Cardiac septum (tissue), 1 donor: ENCODE measurements at regions of chr7 and their contacts with region 1.

Region 1: DNA sequence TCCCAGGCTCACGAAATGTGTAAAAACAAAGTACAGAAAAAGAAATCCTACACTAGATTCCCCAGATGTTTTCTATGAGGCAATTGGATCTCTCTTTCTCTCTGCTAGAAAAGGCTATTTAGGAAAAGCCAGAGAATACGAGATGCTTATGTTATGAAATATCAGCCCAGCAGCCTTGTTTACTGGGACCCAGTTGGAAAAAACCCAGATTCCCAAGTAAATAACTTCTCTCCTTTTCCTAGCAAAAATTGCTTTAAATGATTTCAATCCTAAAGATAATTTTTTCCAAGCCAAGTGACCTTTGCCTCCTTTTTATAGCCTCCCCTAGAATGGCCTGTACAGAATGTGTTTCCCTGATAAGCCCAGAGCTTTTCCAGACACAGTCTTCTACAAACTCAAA is 199.3 kb downstream of the PLXNA4 start:
- DNase-seq: no peak

Region 2: GRCh38 chr7:132328047-132328620 is 48.9 kb before region 1 on chr7:
- intact Hi-C with region 1: loop called (anchors 5 kb)
- DNase-seq: no peak

Region 3: DNA sequence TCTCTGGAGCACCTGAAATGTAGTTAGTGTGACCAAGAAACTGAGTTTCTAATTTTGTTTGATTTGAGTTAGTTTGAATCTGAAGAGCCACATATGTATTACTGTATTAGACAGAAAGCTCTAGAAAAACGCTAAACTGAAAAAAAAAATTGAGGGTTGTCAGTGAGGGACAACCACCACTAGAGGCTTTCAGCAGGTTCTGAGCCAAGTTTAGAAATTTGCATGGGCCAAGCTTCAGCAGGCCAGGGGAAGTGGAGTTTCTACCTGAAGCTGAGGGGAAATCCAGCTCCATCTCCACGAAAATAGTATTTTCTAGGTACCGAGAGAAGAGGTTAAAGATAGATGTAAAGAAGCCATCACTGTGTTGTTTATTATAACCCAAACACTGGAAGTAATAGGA is 277.1 kb after region 1 on chr7:
- intact Hi-C with region 1: no loop called
- DNase-seq: no peak

Region 4: DNA sequence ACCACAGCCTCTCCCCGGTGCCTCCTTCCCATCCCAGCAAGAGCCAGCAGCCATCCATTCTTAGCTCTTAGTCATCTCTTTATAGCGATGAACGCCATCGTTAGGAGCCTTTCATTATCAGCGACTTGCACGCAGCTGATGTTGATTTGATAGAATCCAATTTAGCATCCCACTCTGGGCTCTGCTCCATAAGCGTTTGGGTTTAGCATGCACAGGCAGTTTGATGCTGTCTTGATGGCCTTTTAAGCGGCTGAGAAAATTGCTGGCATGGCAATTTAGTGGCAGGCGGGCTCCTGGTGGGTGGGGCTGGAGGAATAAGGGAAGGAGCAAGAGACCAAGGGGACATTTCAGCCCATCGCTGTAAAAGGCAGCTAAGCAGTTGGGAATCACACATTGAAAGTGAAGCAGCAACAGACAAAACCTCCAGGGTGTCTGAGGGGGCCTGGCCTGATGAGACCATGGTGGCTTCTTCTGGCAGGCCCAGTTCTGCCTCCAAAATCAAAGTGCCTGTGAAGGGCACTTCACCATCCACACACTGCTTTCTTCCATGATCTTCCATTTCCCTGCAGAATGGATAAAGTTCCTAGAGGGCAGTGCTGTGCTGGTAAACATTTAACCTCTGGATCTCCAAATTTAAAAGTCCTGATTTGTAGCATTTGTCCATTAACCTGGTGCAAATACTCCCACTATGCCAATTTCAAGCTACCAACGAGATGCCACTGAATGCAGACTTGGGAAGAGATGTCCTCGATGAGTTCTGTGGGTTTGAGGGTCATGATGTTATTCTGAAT is 307.1 kb after region 1 on chr7:
- intact Hi-C with region 1: no loop called
- DNase-seq: no peak